ENCODE measurements at regions of chr18 and their contacts with region 1.

Region 1: DNA sequence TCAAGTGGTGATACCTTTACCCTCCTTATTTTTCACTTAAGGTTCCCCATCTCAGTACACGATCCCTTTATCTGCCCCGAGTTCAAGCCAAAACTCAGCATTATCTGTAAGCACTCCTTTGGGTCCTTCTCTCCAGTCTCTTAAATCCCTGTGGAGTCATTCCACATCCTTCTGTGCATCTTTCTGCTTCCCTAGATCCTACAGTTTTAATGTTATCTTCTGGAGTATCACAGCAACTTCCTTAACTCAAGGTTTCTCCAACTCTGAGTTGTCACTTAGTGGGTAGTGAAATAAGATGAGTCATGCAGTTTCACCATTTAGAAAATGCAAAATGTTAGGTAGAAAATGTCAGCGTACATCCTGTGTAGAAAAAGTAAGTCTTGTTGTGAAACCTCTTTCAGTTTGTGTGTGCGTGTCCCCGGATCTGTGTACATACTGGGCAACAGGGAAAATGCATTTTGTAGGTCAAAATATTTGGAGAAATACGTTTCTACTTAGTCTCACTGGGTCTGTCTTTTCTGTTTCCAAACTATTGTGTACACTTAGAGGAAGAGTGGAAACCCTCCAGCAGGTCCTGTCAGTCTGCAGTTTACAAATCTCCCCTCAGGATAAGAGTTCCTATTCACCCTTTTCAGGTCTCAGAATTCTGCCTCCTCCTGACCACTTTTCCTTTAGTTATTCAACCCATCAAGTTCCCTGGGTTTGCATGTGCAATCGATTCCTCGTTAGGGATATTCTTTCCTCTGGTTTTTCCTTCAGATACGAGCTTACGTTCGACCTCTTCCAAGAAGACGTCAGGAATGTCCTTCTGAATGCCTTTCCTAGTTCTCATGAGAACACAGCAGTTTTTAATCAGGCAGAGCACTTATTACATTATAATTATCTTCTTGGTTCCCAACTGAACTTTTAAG is 154.8 kb downstream of the TGIF1 start:
- DNase-seq: peak; percentile 98
- ATAC-seq: peak; percentile 40
- H3K4me3 ChIP-seq: peak overlapping the region; percentile 49
- H3K27ac ChIP-seq: peak overlapping the region; percentile 100
- H3K4me1 ChIP-seq: peaks cover 12% of the 10 kb centered on the region
- H3K27me3 ChIP-seq: no peaks in the 10 kb centered on the region
- CTCF ChIP-seq: no peak
- POLR2A ChIP-seq: peak; percentile 91
- RAD21 ChIP-seq: 0 out of 2 replicates have a peak, but pooled peaks have one; percentile 4

Region 2: GRCh38 chr18:3209859-3210569 is 394.7 kb before region 1 on chr18:
- CTCF ChIA-PET with region 1: no interaction called
- POLR2A ChIA-PET with region 1: no interaction called
- dilution Hi-C with region 1: no loop called
- in situ Hi-C with region 1: no loop called
- intact Hi-C with region 1: no loop called
- DNase-seq: no peak
- ATAC-seq: no peak
- H3K4me3 ChIP-seq: no peak overlapping the region
- H3K27ac ChIP-seq: no peak overlapping the region
- H3K4me1 ChIP-seq: no peaks in the 10 kb centered on the region; the same call in 1 of the 2 replicates
- H3K27me3 ChIP-seq: no peaks in the 10 kb centered on the region
- CTCF ChIP-seq: no peak
- POLR2A ChIP-seq: no peak
- RAD21 ChIP-seq: no peak

Region 3: DNA sequence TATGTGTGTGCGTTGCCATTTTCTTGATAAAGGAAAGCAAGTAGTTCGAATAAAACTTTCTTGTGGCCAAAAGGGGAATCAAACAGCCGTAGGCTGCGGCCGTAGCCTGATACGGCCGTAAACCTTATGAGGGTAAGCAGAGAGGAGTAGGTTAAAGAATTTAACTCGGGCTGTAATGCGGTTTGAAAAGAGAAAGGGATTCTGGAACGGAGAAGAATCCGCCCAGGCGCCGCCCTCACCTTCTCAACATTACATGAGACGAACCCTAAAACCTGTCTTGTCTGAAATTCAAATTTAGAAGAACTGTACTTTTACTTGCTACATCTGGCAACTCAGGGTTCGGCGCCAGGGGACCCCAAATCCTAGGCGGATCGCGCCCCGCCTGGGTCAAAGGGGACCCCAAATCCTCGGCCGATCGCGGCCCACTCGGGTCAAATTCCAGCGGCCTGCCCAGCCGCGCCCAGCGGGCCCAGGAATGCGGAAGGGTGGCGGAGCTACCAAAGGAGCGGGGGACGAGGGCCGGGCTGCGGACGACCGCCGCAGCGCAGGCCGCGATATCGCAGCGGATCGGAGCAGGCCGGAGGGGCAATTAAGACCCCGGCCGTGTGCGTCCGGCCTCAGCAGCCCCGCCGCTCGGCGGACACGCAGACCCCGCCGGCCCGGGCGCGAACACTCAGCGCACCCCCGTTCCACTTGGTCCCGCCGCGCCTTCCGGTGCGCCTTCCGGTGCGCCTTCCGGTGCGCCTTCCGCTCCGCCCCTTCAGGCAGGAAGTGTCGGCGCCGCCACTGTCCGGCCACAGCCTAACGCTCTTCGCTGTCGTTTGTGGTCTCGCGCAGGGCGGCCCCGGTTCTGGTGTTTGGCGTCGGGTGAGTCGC is 343.1 kb before region 1 on chr18 and contains the start of gene MYL12B:
- CTCF ChIA-PET with region 1: interaction called, 3 read pairs
- POLR2A ChIA-PET with region 1: no interaction called
- dilution Hi-C with region 1: no loop called
- in situ Hi-C with region 1: no loop called
- intact Hi-C with region 1: loop called (anchors 5 kb)
- DNase-seq: peak; percentile 68
- ATAC-seq: peak; percentile 80
- H3K4me3 ChIP-seq: peak within 1 kb of the TSS; percentile 87
- H3K27ac ChIP-seq: peak within 1 kb of the TSS; percentile 99
- H3K4me1 ChIP-seq: peaks cover 15% of the 10 kb centered on the region
- H3K27me3 ChIP-seq: no peaks in the 10 kb centered on the region
- CTCF ChIP-seq: no peak
- POLR2A ChIP-seq: peak; percentile 86
- RAD21 ChIP-seq: no peak
- total RNA-seq, gene MYL12B: 593 and 692 TPM in 2 replicates

Region 4: GRCh38 chr18:3498698-3499471 is 105.9 kb before region 1 on chr18:
- CTCF ChIA-PET with region 1: no interaction called
- POLR2A ChIA-PET with region 1: no interaction called
- dilution Hi-C with region 1: no loop called
- in situ Hi-C with region 1: no loop called
- intact Hi-C with region 1: no loop called
- DNase-seq: peak; percentile 39
- ATAC-seq: peak; percentile 89
- H3K4me3 ChIP-seq: peak overlapping the region; percentile 38
- H3K27ac ChIP-seq: no peak overlapping the region
- H3K4me1 ChIP-seq: no peaks in the 10 kb centered on the region; the same call in 1 of the 2 replicates
- H3K27me3 ChIP-seq: no peaks in the 10 kb centered on the region
- CTCF ChIP-seq: no peak
- POLR2A ChIP-seq: no peak
- RAD21 ChIP-seq: no peak

Region 5: DNA sequence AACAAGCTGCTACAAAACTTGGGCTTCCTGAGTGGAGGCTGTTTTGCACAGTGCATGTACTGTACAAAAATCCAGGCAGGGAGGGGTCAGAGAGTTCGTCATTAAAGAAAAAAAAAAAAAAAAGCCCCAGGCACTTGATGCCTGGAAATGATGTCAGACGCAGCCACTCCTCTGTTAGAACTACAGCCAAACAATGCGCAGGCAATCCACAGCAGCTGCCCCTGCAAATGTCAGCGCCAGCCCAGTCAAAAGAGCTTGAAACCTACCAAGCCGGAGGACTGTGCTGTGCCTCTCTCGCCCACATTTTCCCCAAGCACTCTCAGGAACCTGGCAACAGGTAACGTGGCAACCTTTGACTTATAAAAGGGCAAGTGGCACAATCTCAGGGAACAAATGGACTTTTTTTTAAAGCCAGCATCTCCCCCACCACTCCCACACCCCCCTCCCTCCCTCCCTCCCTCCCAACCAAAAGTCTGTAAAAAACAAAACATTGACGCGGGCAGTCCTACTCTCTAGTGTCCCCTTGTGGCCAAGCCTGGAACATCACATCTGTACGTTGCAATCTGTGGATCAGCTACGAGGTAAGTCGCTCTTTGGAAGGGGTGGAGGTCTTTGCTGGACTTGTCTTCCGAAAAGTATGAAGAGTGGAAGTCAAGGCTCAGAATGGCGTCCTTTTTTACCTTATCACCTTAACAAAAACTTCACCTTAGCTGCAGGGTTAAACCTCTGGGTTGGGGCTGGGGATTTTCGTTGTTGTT is 10.7 kb before region 1 on chr18:
- CTCF ChIA-PET with region 1: interaction called, 9 read pairs
- POLR2A ChIA-PET with region 1: interaction called, 26 read pairs
- dilution Hi-C with region 1: no loop called
- in situ Hi-C with region 1: no loop called
- intact Hi-C with region 1: loop called (anchors 1 kb)
- DNase-seq: peak; percentile 98
- ATAC-seq: peak; percentile 79
- H3K4me3 ChIP-seq: peak overlapping the region; percentile 57
- H3K27ac ChIP-seq: peak overlapping the region; percentile 96
- H3K4me1 ChIP-seq: peaks cover 29% of the 10 kb centered on the region
- H3K27me3 ChIP-seq: no peaks in the 10 kb centered on the region
- CTCF ChIP-seq: peak; percentile 83
- POLR2A ChIP-seq: peak; percentile 90
- RAD21 ChIP-seq: peak; percentile 65

Region 6: GRCh38 chr18:3652380-3653262 is 47.9 kb after region 1 on chr18:
- CTCF ChIA-PET with region 1: no interaction called
- POLR2A ChIA-PET with region 1: interaction called, 6 read pairs
- dilution Hi-C with region 1: no loop called
- in situ Hi-C with region 1: no loop called
- intact Hi-C with region 1: loop called (anchors 1 kb)
- DNase-seq: peak; percentile 99
- ATAC-seq: peak; percentile 82
- H3K4me3 ChIP-seq: no peak overlapping the region
- H3K27ac ChIP-seq: peak overlapping the region; percentile 94
- H3K4me1 ChIP-seq: peaks cover 27% of the 10 kb centered on the region
- H3K27me3 ChIP-seq: no peaks in the 10 kb centered on the region
- CTCF ChIP-seq: peak; percentile 21; the same call in 1 of the 2 replicates
- POLR2A ChIP-seq: peak; percentile 94
- RAD21 ChIP-seq: peak; percentile 29; the same call in 1 of the 2 replicates

Region 7: GRCh38 chr18:3869848-3870247 is 265.1 kb after region 1 on chr18:
- CTCF ChIA-PET with region 1: no interaction called
- POLR2A ChIA-PET with region 1: no interaction called
- dilution Hi-C with region 1: no loop called
- in situ Hi-C with region 1: no loop called
- intact Hi-C with region 1: loop called (anchors 5 kb)
- DNase-seq: peak; percentile 76
- ATAC-seq: peak; percentile 87
- H3K4me3 ChIP-seq: no peak overlapping the region
- H3K27ac ChIP-seq: no peak overlapping the region
- H3K4me1 ChIP-seq: no peaks in the 10 kb centered on the region
- H3K27me3 ChIP-seq: peaks cover 3% of the 10 kb centered on the region; the same call in 1 of the 2 replicates
- CTCF ChIP-seq: peak; percentile 71
- POLR2A ChIP-seq: no peak
- RAD21 ChIP-seq: peak; percentile 83